Caco-2 (cell line): ENCODE measurements at regions of chr10 and their contacts with region 1.

Region 1: DNA sequence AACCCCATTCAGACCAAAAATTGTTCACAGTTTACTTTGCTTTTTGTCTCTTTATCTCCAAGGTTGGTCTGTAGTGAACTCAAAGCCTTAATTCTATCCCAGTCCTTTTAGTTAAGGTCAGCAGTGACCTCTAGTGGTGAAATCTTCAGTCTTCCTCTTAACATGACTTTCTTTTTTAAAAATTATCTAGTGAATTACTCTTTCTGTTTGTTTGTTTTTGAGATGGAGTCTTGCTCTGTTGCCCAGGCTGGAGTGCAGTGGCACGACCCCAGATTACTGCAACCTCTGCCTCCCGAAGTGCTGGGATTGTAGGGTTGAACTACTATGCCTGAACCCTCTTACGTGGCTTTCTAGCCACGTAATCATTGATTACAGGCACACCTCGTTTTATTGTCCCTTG is 25.0 kb downstream of the ZNF487 start:
- DNase-seq: peak; percentile 36 to 80
- H3K4me3 ChIP-seq: no peak overlapping the region
- H3K4me3 Mint-ChIP-seq: no peak overlapping the region
- H3K27ac Mint-ChIP-seq: no peak overlapping the region
- H3K4me1 ChIP-seq: no peaks in the 10 kb centered on the region
- H3K4me1 Mint-ChIP-seq: peaks cover 7% of the 10 kb centered on the region
- H3K27me3 ChIP-seq: no peaks in the 10 kb centered on the region
- H3K27me3 Mint-ChIP-seq: no peaks in the 10 kb centered on the region
- CTCF ChIP-seq: peak; percentile 79 to 82

Region 2: GRCh38 chr10:43170491-43170890 is 291.5 kb before region 1 on chr10:
- CTCF ChIA-PET with region 1: no interaction called
- POLR2A ChIA-PET with region 1: no interaction called
- intact Hi-C with region 1: loop called (anchors 10 kb)
- DNase-seq: peak in 1 of 2 experiments; percentile 16
- H3K4me3 ChIP-seq: no peak overlapping the region
- H3K4me3 Mint-ChIP-seq: no peak overlapping the region
- H3K27ac Mint-ChIP-seq: no peak overlapping the region
- H3K4me1 ChIP-seq: no peaks in the 10 kb centered on the region
- H3K4me1 Mint-ChIP-seq: no peaks in the 10 kb centered on the region
- H3K27me3 ChIP-seq: no peaks in the 10 kb centered on the region
- H3K27me3 Mint-ChIP-seq: no peaks in the 10 kb centered on the region
- CTCF ChIP-seq: peak; percentile 39 to 52

Region 3: GRCh38 chr10:43221419-43222209 is 240.3 kb before region 1 on chr10:
- CTCF ChIA-PET with region 1: no interaction called
- POLR2A ChIA-PET with region 1: no interaction called
- intact Hi-C with region 1: loop called (anchors 1 kb)
- DNase-seq: peak; percentile 52 to 60
- H3K4me3 ChIP-seq: no peak overlapping the region
- H3K4me3 Mint-ChIP-seq: no peak overlapping the region
- H3K27ac Mint-ChIP-seq: no peak overlapping the region
- H3K4me1 ChIP-seq: no peaks in the 10 kb centered on the region
- H3K4me1 Mint-ChIP-seq: no peaks in the 10 kb centered on the region
- H3K27me3 ChIP-seq: 0 out of 2 replicates have a peak, but pooled peaks cover 1% of the 10 kb centered on the region
- H3K27me3 Mint-ChIP-seq: peaks cover 15% of the 10 kb centered on the region
- CTCF ChIP-seq: peak; percentile 24 to 56

Region 4: GRCh38 chr10:43260117-43260761 is 201.7 kb before region 1 on chr10:
- CTCF ChIA-PET with region 1: no interaction called
- POLR2A ChIA-PET with region 1: no interaction called
- intact Hi-C with region 1: no loop called
- DNase-seq: no peak
- H3K4me3 ChIP-seq: no peak overlapping the region
- H3K4me3 Mint-ChIP-seq: no peak overlapping the region
- H3K27ac Mint-ChIP-seq: no peak overlapping the region
- H3K4me1 ChIP-seq: peaks cover 12% of the 10 kb centered on the region
- H3K4me1 Mint-ChIP-seq: no peaks in the 10 kb centered on the region
- H3K27me3 ChIP-seq: peaks cover 3% of the 10 kb centered on the region; the same call in 1 of the 2 replicates
- H3K27me3 Mint-ChIP-seq: peaks cover 10% of the 10 kb centered on the region
- CTCF ChIP-seq: no peak

Region 5: DNA sequence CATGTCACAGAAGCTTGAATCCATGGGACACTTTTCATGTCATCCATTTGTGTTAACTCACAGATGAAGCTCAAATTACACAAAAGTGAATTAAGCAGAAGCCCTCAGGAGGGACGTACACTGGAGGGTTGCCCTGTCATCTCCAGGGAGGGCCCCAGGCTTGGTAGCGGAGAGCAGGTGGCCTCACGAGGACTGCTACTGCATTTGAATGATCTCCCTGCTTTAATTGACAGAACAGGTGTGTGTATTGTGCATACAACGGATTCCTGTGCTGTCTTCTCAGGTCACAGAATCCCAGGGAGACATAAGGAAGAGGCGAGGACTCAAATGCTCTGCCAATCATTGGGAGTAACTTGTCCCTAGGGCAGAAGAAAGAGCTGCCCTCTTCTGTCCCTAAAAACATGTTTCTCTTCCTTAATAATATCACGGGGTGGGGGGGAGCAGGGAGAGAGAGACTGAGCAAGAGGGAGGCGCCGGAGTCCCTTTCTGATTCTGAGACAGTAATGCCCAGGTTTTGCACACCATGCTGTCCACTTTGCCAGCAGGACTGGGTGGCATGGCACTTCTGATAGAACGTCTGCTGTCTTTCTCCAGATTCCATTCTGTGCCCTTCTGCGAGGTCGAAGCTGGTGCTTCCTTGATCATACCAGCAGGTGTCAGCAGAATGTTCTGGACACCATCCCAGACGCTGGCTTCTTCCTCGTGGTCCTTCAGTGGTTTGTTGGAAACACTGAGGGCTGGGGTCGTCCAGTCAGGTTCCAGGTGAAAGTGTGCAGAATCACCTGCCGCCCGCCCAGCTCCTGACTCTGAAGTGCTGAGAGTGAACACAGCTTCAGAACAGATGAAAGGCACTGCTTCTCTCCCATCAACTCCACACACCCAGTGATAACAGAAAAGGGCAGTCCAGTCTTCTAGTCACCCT is 168.9 kb before region 1 on chr10:
- CTCF ChIA-PET with region 1: no interaction called
- POLR2A ChIA-PET with region 1: no interaction called
- intact Hi-C with region 1: loop called (anchors 1 kb)
- DNase-seq: peak; percentile 77
- H3K4me3 ChIP-seq: no peak overlapping the region
- H3K4me3 Mint-ChIP-seq: peak overlapping the region; percentile 14
- H3K27ac Mint-ChIP-seq: no peak overlapping the region
- H3K4me1 ChIP-seq: 0 out of 2 replicates have a peak, but pooled peaks cover 4% of the 10 kb centered on the region
- H3K4me1 Mint-ChIP-seq: no peaks in the 10 kb centered on the region
- H3K27me3 ChIP-seq: no peaks in the 10 kb centered on the region
- H3K27me3 Mint-ChIP-seq: peaks cover 5% of the 10 kb centered on the region
- CTCF ChIP-seq: peak; percentile 87 to 97

Region 6: DNA sequence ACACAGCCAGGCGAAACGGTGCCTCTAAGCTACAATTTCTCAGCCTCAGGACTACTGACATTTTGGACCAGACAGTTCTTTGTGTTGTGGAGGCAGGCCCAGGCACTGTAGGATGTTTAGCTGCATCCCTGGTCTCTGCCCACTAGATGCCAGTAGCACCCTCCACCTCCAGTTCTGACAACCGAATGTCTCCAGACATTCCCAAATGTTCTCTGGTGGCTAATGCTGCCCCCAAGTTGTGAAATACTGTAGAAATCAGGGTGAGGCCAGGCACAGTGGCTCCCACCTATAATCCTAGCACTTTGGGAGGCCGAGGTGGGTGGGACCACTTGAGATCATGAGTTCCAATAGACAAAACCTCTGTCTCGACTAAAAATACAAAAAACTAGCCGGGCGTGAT is 71.2 kb before region 1 on chr10:
- CTCF ChIA-PET with region 1: no interaction called
- POLR2A ChIA-PET with region 1: interaction called, 3 read pairs
- intact Hi-C with region 1: loop called (anchors 1 kb)
- DNase-seq: peak in 1 of 2 experiments; percentile 66
- H3K4me3 ChIP-seq: no peak overlapping the region
- H3K4me3 Mint-ChIP-seq: peak overlapping the region; percentile 4
- H3K27ac Mint-ChIP-seq: peak overlapping the region; percentile 68
- H3K4me1 ChIP-seq: peaks cover 37% of the 10 kb centered on the region
- H3K4me1 Mint-ChIP-seq: peaks cover 60% of the 10 kb centered on the region
- H3K27me3 ChIP-seq: no peaks in the 10 kb centered on the region
- H3K27me3 Mint-ChIP-seq: no peaks in the 10 kb centered on the region
- CTCF ChIP-seq: peak; percentile 55 to 71

Region 7: GRCh38 chr10:43448742-43449141 is 13.2 kb before region 1 on chr10:
- CTCF ChIA-PET with region 1: no interaction called
- POLR2A ChIA-PET with region 1: interaction called, 11 read pairs
- intact Hi-C with region 1: no loop called
- DNase-seq: no peak
- H3K4me3 ChIP-seq: no peak overlapping the region
- H3K4me3 Mint-ChIP-seq: no peak overlapping the region
- H3K27ac Mint-ChIP-seq: no peak overlapping the region
- H3K4me1 ChIP-seq: no peaks in the 10 kb centered on the region
- H3K4me1 Mint-ChIP-seq: peaks cover 9% of the 10 kb centered on the region
- H3K27me3 ChIP-seq: no peaks in the 10 kb centered on the region
- H3K27me3 Mint-ChIP-seq: no peaks in the 10 kb centered on the region
- CTCF ChIP-seq: no peak